Activated CD4-positive, alpha-beta T cell treated with anti-CD3 and anti-CD28 coated beads for 36 hours (primary cell): ENCODE measurements at regions of chr4 and their contacts with region 1.

Region 1: GRCh38 chr4:139978692-139979091 is 175.3 kb downstream of the MAML3 start:
- DNase-seq: peak; percentile 34
- ATAC-seq: peak; percentile 97
- H3K4me3 Mint-ChIP-seq: no peak overlapping the region
- H3K27ac Mint-ChIP-seq: peak overlapping the region; percentile 58
- H3K4me1 Mint-ChIP-seq: peaks cover 28% of the 10 kb centered on the region
- H3K27me3 Mint-ChIP-seq: no peaks in the 10 kb centered on the region

Region 2: DNA sequence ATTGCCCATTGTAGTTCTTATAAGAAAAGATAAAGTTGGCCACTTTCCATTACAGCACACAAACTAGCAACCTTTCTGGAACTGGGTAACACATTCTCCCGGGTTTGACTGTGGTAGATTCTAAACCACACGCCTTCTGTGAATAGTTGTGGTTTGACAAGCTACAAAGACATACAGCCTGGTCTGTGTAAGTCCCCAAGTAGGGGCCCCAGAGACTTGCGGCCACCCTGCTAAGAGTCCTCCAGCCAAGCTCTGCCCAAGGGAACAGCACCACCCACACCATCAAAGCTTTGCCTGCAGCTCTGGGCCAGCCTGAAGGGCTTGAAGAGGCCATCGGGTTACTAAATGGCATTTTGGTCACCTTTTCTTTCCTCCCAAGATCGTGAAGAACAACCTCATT is 28.1 kb before region 1 on chr4:
- CTCF ChIA-PET with region 1: no interaction called
- POLR2A ChIA-PET with region 1: no interaction called
- intact Hi-C with region 1: loop called in 1 of 2 experiments (anchors 2 kb)
- DNase-seq: peak; percentile 69
- ATAC-seq: peak; percentile 83
- H3K4me3 Mint-ChIP-seq: peak overlapping the region; percentile 2
- H3K27ac Mint-ChIP-seq: peak overlapping the region; percentile 80
- H3K4me1 Mint-ChIP-seq: peaks cover 25% of the 10 kb centered on the region
- H3K27me3 Mint-ChIP-seq: peaks cover 2% of the 10 kb centered on the region